ENCODE measurements at regions of chr16 and their contacts with region 1.

Region 1: GRCh38 chr16:66859397-66860068 is 15.3 kb downstream of the CA7 start:
- DNase-seq: no peak
- ATAC-seq: peak; percentile 33; the same call in 1 of the 2 replicates
- H3K4me3 ChIP-seq: no peak overlapping the region
- H3K27ac ChIP-seq: no peak overlapping the region
- H3K4me1 ChIP-seq: peaks cover 6% of the 10 kb centered on the region; the same call in 1 of the 2 replicates
- H3K27me3 ChIP-seq: no peaks in the 10 kb centered on the region
- CTCF ChIP-seq: no peak

Region 2: GRCh38 chr16:66751303-66751991 is 108.1 kb before region 1 on chr16 and contains the start of gene DYNC1LI2:
- CTCF ChIA-PET with region 1: no interaction called
- POLR2A ChIA-PET with region 1: no interaction called
- intact Hi-C with region 1: loop called (anchors 10 kb)
- DNase-seq: peak; percentile 74
- ATAC-seq: peak; percentile 89
- H3K4me3 ChIP-seq: peak within 1 kb of the TSS; percentile 99
- H3K27ac ChIP-seq: peak within 1 kb of the TSS; percentile 40; the same call in 1 of the 2 replicates
- H3K4me1 ChIP-seq: peaks cover 20% of the 10 kb centered on the region
- H3K27me3 ChIP-seq: no peaks in the 10 kb centered on the region
- CTCF ChIP-seq: peak; percentile 58
- total RNA-seq, gene DYNC1LI2: 63.9 and 82.8 TPM in 2 replicates

Region 3: DNA sequence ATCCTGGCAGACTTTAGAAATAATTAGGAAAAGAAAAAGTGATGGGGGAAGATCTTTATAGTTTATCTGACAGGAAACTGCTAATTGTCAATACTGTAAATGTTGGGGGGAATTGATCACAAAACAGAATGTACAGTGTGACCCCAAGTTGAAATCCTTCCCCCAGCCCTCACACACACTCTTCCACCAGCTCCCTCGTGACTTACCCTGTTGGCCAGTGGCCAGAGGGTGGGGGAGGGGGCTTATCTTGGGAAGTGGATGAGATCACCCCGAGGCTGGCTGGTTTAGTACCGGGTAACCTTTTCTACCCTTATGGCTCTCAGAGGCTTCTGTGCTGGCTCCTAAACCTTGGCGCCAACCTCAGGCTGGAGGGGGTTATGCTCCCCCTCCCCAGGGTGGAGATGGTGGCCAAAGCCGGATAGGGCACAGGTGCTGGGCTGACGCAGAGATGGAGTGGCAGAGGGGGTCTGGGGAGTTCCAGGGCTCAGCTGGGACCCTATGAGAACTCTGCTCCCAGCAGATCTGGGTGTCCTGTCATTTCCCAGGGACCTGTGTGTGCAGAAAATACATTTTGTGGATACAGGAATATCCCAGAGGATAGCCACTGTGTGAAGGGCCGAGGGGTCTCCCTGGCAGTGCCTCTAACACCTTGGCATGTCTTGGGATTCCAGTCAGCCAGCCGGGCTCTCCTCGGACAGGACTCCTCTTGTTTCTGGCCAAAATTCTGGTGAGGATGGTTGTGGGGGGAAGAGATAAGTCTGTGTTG is 40.6 kb after region 1 on chr16:
- CTCF ChIA-PET with region 1: no interaction called
- POLR2A ChIA-PET with region 1: no interaction called
- intact Hi-C with region 1: no loop called
- DNase-seq: peak; percentile 21
- ATAC-seq: 0 out of 2 replicates have a peak, but pooled peaks have one; percentile 13
- H3K4me3 ChIP-seq: no peak overlapping the region
- H3K27ac ChIP-seq: no peak overlapping the region
- H3K4me1 ChIP-seq: peaks cover 4% of the 10 kb centered on the region; the same call in 1 of the 2 replicates
- H3K27me3 ChIP-seq: no peaks in the 10 kb centered on the region
- CTCF ChIP-seq: no peak